BJ (cell line): ENCODE measurements at regions of chr7 and their contacts with region 1.

Region 1: GRCh38 chr7:129884495-129884894 is 68.3 kb downstream of the UBE2H start:
- DNase-seq: no peak
- H3K4me3 ChIP-seq: no peak overlapping the region
- H3K27me3 ChIP-seq: no peaks in the 10 kb centered on the region
- CTCF ChIP-seq: no peak

Region 2: GRCh38 chr7:129914536-129915272 is 30.2 kb after region 1 on chr7:
- CTCF ChIA-PET with region 1: no interaction called
- POLR2A ChIA-PET with region 1: interaction called, 10 read pairs
- DNase-seq: no peak
- H3K4me3 ChIP-seq: no peak overlapping the region
- H3K27me3 ChIP-seq: no peaks in the 10 kb centered on the region
- CTCF ChIP-seq: no peak